ENCODE measurements at regions of chr14 and their contacts with region 1.

Region 1: DNA sequence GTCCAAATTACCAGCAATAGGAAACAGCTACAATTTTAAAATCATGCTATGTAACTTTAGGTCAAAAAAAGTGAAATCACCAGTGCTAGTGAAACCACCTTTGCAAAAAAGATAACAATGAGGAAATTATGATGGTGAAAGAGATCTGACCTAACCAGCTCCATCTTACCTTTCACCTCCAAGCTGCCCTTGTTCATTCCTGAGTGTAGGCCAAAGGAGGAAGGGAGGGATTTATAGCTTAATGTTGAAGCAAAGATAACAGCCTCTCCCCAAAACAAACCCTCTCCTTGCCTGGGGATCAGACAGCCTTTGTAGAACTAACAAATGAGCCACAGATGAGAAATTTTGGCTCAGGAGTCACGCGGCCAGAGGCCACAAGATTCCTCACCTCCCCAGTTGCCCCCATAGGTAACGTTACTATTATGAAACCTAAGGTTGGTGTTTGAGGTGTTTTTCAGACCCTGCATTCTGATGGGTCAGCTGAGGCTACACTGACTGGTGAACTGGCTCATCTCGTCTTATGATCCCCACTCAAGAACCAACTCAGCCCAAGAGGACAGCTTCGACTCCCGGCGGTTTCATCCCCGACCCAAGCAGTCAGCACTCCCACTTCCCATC is 83.0 kb upstream of the EIF5 start:
- DNase-seq: no peak
- H3K4me3 ChIP-seq: no peak overlapping the region
- H3K27ac ChIP-seq: no peak overlapping the region
- H3K4me1 ChIP-seq: no peaks in the 10 kb centered on the region
- H3K27me3 ChIP-seq: no peaks in the 10 kb centered on the region
- CTCF ChIP-seq: no peak
- EP300 ChIP-seq: no peak
- POLR2A ChIP-seq: no peak
- RAD21 ChIP-seq: no peak

Region 2: GRCh38 chr14:103209054-103209453 is 41.9 kb before region 1 on chr14:
- CTCF ChIA-PET with region 1: interaction called, 11 read pairs
- POLR2A ChIA-PET with region 1: no interaction called
- DNase-seq: no peak
- H3K4me3 ChIP-seq: no peak overlapping the region
- H3K27ac ChIP-seq: no peak overlapping the region
- H3K4me1 ChIP-seq: peaks cover 0 to 7% (median 0%) of the 10 kb centered on the region in 4 experiments; a peak in 3 of 7 replicates
- H3K27me3 ChIP-seq: peaks cover 0 to 30% (median 16%) of the 10 kb centered on the region in 4 experiments; a peak in 5 of 7 replicates
- CTCF ChIP-seq: peak in 1 of 3 experiments; percentile 9; a peak in 1 of 4 replicates
- EP300 ChIP-seq: no peak
- POLR2A ChIP-seq: no peak
- RAD21 ChIP-seq: no peak

Region 3: GRCh38 chr14:103499706-103500105 is 248.7 kb after region 1 on chr14:
- CTCF ChIA-PET with region 1: no interaction called
- POLR2A ChIA-PET with region 1: no interaction called
- DNase-seq: no peak
- H3K4me3 ChIP-seq: no peak overlapping the region
- H3K27ac ChIP-seq: no peak overlapping the region
- H3K4me1 ChIP-seq: no peaks in the 10 kb centered on the region
- H3K27me3 ChIP-seq: no peaks in the 10 kb centered on the region; a peak in 1 of 7 replicates
- CTCF ChIP-seq: no peak
- EP300 ChIP-seq: no peak
- POLR2A ChIP-seq: no peak
- RAD21 ChIP-seq: no peak